ENCODE measurements at regions of chr6 and their contacts with region 1.

Region 1: DNA sequence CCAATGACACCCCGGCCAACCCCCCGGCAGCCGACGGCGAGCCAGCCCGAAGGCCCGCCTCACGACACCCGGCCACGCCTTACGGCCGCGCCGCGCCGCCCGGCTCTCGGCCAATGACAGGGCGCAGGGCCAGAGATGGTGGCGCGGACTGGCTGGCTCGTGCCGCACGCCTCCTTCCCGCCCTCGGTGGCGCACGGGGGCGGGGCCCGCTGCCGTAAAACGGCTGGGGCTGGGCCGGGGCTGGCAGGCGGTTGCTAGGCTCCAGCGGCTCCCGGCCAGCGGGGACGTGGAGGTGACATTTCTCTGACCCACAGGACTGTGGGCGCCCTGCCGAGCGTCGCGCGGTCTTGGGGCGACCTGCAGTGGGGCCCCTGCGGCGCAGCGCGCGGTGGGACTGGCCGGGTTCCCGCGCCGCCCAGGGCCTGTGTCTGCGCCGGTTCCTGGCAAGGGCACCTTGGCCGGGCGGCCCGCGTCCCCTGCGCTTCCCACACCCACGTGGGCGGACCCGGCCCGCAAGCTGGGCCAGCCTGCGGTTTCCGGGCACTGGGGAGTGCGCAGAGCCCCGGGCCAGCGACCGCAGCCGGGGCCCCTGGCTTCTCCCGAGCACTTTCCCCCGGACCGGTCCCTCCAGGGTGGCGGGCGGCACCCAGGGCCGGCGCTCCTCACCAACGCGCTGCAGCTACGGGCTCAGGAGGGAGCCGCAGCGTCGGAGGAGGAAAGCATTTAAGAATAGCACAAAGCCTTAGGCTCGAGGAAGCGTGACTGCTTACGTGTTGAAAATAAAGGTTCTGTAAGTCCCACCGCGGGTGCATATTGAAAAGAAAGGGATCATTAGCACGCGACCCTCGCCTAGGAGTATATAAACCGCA is at the start of gene MPC1:
- DNase-seq: peak; percentile 97 to 98 (median 98)
- ATAC-seq: peak; percentile 95
- H3K4me3 ChIP-seq: peak within 1 kb of the TSS; percentile 96
- H3K27ac ChIP-seq: peak within 1 kb of the TSS; percentile 76
- H3K4me1 ChIP-seq: peaks cover 3 to 20% of the 10 kb centered on the region in 2 experiments; a peak in 1 of 5 replicates
- H3K27me3 ChIP-seq: no peaks in the 10 kb centered on the region; a peak in 2 of 5 replicates
- CTCF ChIP-seq: no peak
- EP300 ChIP-seq: no peak
- POLR2A ChIP-seq: peak; percentile 87
- RAD21 ChIP-seq: no peak
- polyA plus RNA-seq, gene MPC1: 138 to 144 TPM

Region 2: GRCh38 chr6:166313255-166314070 is 69.7 kb before region 1 on chr6:
- CTCF ChIA-PET with region 1: interaction called, 3 read pairs
- POLR2A ChIA-PET with region 1: interaction called, 3 read pairs
- in situ Hi-C with region 1: no loop called
- intact Hi-C with region 1: loop called (anchors 2 kb)
- DNase-seq: peak; percentile 79 to 85 (median 82)
- ATAC-seq: peak; percentile 92
- H3K4me3 ChIP-seq: no peak overlapping the region
- H3K27ac ChIP-seq: no peak overlapping the region
- H3K4me1 ChIP-seq: peaks cover 0 to 4% of the 10 kb centered on the region in 2 experiments; a peak in 2 of 5 replicates
- H3K27me3 ChIP-seq: peaks cover 13 to 22% of the 10 kb centered on the region in 2 experiments
- CTCF ChIP-seq: peak; percentile 88 to 90 (median 89)
- EP300 ChIP-seq: 0 out of 2 replicates have a peak, but pooled peaks have one; percentile 7
- POLR2A ChIP-seq: no peak
- RAD21 ChIP-seq: peak; percentile 77 to 89

Region 3: GRCh38 chr6:166333172-166333995 is 49.8 kb before region 1 on chr6:
- CTCF ChIA-PET with region 1: interaction called, 3 read pairs
- POLR2A ChIA-PET with region 1: interaction called, 4 read pairs
- in situ Hi-C with region 1: loop called (anchors 5 kb)
- intact Hi-C with region 1: no loop called
- DNase-seq: no peak
- ATAC-seq: no peak
- H3K4me3 ChIP-seq: no peak overlapping the region
- H3K27ac ChIP-seq: no peak overlapping the region
- H3K4me1 ChIP-seq: peaks cover 5 to 14% of the 10 kb centered on the region in 2 experiments; a peak in 4 of 5 replicates
- H3K27me3 ChIP-seq: no peaks in the 10 kb centered on the region
- CTCF ChIP-seq: no peak
- EP300 ChIP-seq: no peak
- POLR2A ChIP-seq: peak; percentile 54
- RAD21 ChIP-seq: no peak

Region 4: GRCh38 chr6:166342349-166343149 is 40.6 kb before region 1 on chr6 and contains the start of gene SFT2D1:
- CTCF ChIA-PET with region 1: no interaction called
- POLR2A ChIA-PET with region 1: interaction called, 3 read pairs
- in situ Hi-C with region 1: no loop called
- intact Hi-C with region 1: loop called (anchors 2 kb)
- DNase-seq: peak; percentile 93 to 95 (median 95)
- ATAC-seq: peak; percentile 97
- H3K4me3 ChIP-seq: peak within 1 kb of the TSS; percentile 98
- H3K27ac ChIP-seq: peak within 1 kb of the TSS; percentile 96
- H3K4me1 ChIP-seq: peaks cover 10 to 18% of the 10 kb centered on the region in 2 experiments; a peak in 4 of 5 replicates
- H3K27me3 ChIP-seq: no peaks in the 10 kb centered on the region
- CTCF ChIP-seq: 0 out of 6 replicates have a peak, but pooled peaks of 1 of the 3 experiments have one; percentile 2
- EP300 ChIP-seq: peak; percentile 34; the same call in 1 of the 2 replicates
- POLR2A ChIP-seq: peak; percentile 97
- RAD21 ChIP-seq: no peak
- polyA plus RNA-seq, gene SFT2D1: 73.0 to 74.6 TPM

Region 5: GRCh38 chr6:166419286-166419685 is 36.1 kb after region 1 on chr6:
- CTCF ChIA-PET with region 1: no interaction called
- POLR2A ChIA-PET with region 1: no interaction called
- in situ Hi-C with region 1: no loop called
- intact Hi-C with region 1: no loop called
- DNase-seq: no peak
- ATAC-seq: peak; percentile 39
- H3K4me3 ChIP-seq: no peak overlapping the region
- H3K27ac ChIP-seq: no peak overlapping the region
- H3K4me1 ChIP-seq: no peaks in the 10 kb centered on the region
- H3K27me3 ChIP-seq: peaks cover 49 to 77% of the 10 kb centered on the region in 2 experiments
- CTCF ChIP-seq: no peak
- EP300 ChIP-seq: no peak
- POLR2A ChIP-seq: no peak
- RAD21 ChIP-seq: no peak

Measured in K562 (cell line).